Endothelial cell of umbilical vein (primary cell): ENCODE measurements at regions of chr5 and their contacts with region 1.

Region 1: GRCh38 chr5:59188419-59189225 is 605.7 kb downstream of the RAB3C start:
- DNase-seq: peak; percentile 73
- H3K4me3 ChIP-seq: peak overlapping the region in 1 of 3 experiments; percentile 33
- H3K27ac ChIP-seq: no peak overlapping the region
- H3K4me1 ChIP-seq: peaks cover 4% of the 10 kb centered on the region
- H3K27me3 ChIP-seq: no peaks in the 10 kb centered on the region
- CTCF ChIP-seq: peak; percentile 47 to 55
- POLR2A ChIP-seq: no peak

Region 2: DNA sequence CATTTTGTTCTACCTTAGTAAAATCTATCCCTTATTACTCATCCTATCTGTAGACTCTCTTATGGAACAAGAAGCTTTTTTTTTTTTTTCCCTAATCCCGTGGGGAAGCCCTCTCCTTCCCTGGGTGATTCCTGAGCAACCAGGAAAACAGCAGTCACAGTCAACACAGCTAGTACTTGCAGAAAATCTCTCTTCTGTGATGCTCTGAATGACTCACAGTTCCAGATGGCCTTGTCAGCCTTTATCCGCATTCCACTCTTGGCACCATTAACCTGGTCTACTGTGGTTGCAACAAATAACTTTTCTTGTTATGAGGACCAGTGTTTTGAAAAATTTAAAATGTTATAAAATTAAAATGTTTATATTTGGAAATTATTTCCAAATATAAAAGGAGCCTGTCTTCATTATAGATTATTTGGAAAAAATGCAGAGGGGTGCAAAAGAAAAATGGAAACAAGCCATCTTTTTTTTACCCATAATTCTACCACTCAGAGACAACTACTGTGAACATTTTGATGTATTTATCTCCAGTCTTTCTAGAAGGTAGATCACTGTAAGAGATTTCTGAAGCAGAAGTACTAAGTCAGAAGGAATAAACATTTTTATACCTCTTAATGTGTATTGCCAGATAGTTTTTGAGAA is 119.1 kb before region 1 on chr5:
- CTCF ChIA-PET with region 1: no interaction called
- POLR2A ChIA-PET with region 1: no interaction called
- dilution Hi-C with region 1: no loop called
- intact Hi-C with region 1: no loop called
- DNase-seq: peak; percentile 5
- H3K4me3 ChIP-seq: no peak overlapping the region
- H3K27ac ChIP-seq: no peak overlapping the region
- H3K4me1 ChIP-seq: no peaks in the 10 kb centered on the region
- H3K27me3 ChIP-seq: no peaks in the 10 kb centered on the region
- CTCF ChIP-seq: no peak
- POLR2A ChIP-seq: no peak

Region 3: DNA sequence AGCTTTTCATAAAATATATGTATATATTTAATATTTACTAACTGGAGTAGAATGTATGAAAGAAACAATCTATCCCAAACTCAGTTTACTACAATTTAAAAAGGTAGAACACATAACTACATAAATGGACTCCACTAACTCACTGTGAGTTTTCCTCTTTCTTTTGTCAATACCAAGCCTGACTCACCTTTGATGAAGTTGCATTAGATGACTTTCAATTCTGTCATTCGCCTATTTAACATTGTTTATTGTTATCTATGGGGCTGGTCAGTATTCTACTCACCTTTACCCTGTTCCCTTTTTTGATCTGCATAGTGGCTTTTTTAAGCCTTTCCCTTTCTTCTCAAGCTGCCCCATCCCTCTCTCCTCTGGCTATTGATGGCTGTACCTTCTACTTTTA is 24.0 kb after region 1 on chr5:
- CTCF ChIA-PET with region 1: interaction called, 13 read pairs
- POLR2A ChIA-PET with region 1: no interaction called
- dilution Hi-C with region 1: no loop called
- intact Hi-C with region 1: no loop called
- DNase-seq: no peak
- H3K4me3 ChIP-seq: no peak overlapping the region
- H3K27ac ChIP-seq: no peak overlapping the region
- H3K4me1 ChIP-seq: no peaks in the 10 kb centered on the region
- H3K27me3 ChIP-seq: no peaks in the 10 kb centered on the region
- CTCF ChIP-seq: no peak
- POLR2A ChIP-seq: no peak

Region 4: GRCh38 chr5:59351076-59351794 is 162.6 kb after region 1 on chr5:
- CTCF ChIA-PET with region 1: interaction called, 20 read pairs
- POLR2A ChIA-PET with region 1: no interaction called
- dilution Hi-C with region 1: no loop called
- intact Hi-C with region 1: no loop called
- DNase-seq: no peak
- H3K4me3 ChIP-seq: no peak overlapping the region
- H3K27ac ChIP-seq: no peak overlapping the region
- H3K4me1 ChIP-seq: peaks cover 11% of the 10 kb centered on the region
- H3K27me3 ChIP-seq: no peaks in the 10 kb centered on the region
- CTCF ChIP-seq: no peak
- POLR2A ChIP-seq: no peak

Region 5: GRCh38 chr5:59380350-59380951 is 191.8 kb after region 1 on chr5:
- CTCF ChIA-PET with region 1: interaction called, 217 read pairs
- POLR2A ChIA-PET with region 1: no interaction called
- dilution Hi-C with region 1: no loop called
- intact Hi-C with region 1: loop called (anchors 1 kb)
- DNase-seq: peak; percentile 71
- H3K4me3 ChIP-seq: no peak overlapping the region
- H3K27ac ChIP-seq: no peak overlapping the region
- H3K4me1 ChIP-seq: no peaks in the 10 kb centered on the region
- H3K27me3 ChIP-seq: no peaks in the 10 kb centered on the region
- CTCF ChIP-seq: peak; percentile 20 to 26
- POLR2A ChIP-seq: no peak

Region 6: GRCh38 chr5:59506285-59506877 is 317.8 kb after region 1 on chr5:
- CTCF ChIA-PET with region 1: interaction called, 13 read pairs
- POLR2A ChIA-PET with region 1: no interaction called
- dilution Hi-C with region 1: no loop called
- intact Hi-C with region 1: loop called (anchors 2 kb)
- DNase-seq: peak; percentile 39
- H3K4me3 ChIP-seq: no peak overlapping the region
- H3K27ac ChIP-seq: no peak overlapping the region
- H3K4me1 ChIP-seq: no peaks in the 10 kb centered on the region
- H3K27me3 ChIP-seq: peaks cover 0 to 4% of the 10 kb centered on the region in 2 experiments
- CTCF ChIP-seq: peak; percentile 2 to 6
- POLR2A ChIP-seq: no peak

Region 7: GRCh38 chr5:59799668-59800346 is 611.2 kb after region 1 on chr5:
- CTCF ChIA-PET with region 1: interaction called, 12 read pairs
- POLR2A ChIA-PET with region 1: no interaction called
- dilution Hi-C with region 1: no loop called
- intact Hi-C with region 1: loop called (anchors 2 kb)
- DNase-seq: peak; percentile 82
- H3K4me3 ChIP-seq: no peak overlapping the region
- H3K27ac ChIP-seq: peak overlapping the region; percentile 62
- H3K4me1 ChIP-seq: peaks cover 22% of the 10 kb centered on the region
- H3K27me3 ChIP-seq: no peaks in the 10 kb centered on the region
- CTCF ChIP-seq: peak; percentile 33 to 59
- POLR2A ChIP-seq: no peak